Activated CD8-positive, alpha-beta memory T cell treated with anti-CD3 and anti-CD28 coated beads, Interleukin-2, amount 10 ng/mL, durations not matched to agents 7 days and 5 days (primary cell): ENCODE measurements at regions of chr17 and their contacts with region 1.

Region 1: DNA sequence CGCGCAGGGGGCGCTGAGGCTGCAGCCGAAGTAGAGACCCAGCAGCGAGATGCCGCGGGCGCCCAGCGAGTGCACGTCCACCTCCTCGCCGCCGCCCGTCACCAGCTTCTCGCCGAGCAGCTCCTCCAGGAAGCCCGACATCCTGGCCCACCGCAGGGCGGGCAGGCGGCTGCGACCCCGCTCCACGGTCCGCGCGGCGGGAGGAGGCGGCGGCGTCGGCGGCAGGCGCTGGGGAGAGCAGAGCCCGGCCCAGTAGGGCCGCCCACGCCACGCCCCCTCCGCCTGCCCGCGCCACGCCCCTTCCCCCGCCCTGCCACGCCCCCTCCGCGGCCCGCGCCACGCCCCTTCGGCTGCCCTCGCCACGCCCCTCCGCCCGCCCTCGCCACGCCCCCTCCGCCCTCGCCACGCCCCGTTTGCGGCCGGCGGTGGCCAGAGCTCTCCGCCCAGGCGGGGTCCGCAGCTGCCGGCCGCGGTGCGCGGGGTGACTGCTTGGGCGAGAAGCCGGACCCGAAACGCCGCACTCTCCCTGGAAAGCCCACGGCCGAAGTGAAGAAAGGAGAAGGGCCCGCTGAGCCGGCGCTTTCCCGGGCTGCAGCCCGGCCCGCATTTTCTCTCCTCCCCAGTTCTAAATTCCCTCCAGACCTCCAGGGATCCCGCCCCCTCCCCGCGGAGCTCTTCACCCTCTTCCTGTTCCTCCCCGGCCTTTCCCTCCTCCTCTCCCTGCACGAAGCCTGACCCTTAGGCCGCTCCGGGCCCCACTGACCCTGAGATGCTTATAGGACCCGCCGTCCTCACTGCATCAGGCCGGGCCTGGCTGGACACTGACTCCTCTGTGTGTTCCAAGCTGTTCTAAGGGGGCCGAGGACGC is at the start of gene NXN:
- DNase-seq: peak; percentile 89
- ATAC-seq: peak; percentile 94
- H3K4me3 Mint-ChIP-seq: peak within 1 kb of the TSS; percentile 59
- H3K27ac Mint-ChIP-seq: no peak within 1 kb of the TSS
- H3K4me1 Mint-ChIP-seq: peaks cover 9% of the 10 kb centered on the region
- H3K27me3 Mint-ChIP-seq: peaks cover 36% of the 10 kb centered on the region
- total RNA-seq, gene NXN: 0.14 to 0.70 TPM

Region 2: DNA sequence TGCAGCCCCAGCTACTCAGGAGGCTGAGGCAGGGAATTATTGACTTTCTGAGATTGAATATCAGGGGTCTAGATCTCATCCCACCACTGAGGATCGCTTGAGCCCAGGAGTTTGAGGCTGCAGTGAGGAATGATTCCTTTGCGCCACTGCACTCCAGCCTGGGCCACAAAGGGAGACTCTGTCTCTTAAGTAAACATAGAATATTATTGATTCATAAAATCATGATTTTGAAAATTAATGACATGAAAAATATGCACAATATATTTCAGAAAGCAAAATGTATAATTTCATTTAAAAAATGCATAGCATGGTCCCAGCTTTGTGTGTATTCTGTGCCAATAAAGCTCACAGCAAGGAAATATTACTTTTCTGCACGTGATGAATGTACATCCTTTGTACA is 263.5 kb before region 1 on chr17:
- CTCF ChIA-PET with region 1: interaction called, 15 read pairs
- DNase-seq: no peak
- ATAC-seq: no peak
- H3K4me3 Mint-ChIP-seq: no peak overlapping the region
- H3K27ac Mint-ChIP-seq: no peak overlapping the region
- H3K4me1 Mint-ChIP-seq: peaks cover 28% of the 10 kb centered on the region
- H3K27me3 Mint-ChIP-seq: peaks cover 3% of the 10 kb centered on the region

Region 3: DNA sequence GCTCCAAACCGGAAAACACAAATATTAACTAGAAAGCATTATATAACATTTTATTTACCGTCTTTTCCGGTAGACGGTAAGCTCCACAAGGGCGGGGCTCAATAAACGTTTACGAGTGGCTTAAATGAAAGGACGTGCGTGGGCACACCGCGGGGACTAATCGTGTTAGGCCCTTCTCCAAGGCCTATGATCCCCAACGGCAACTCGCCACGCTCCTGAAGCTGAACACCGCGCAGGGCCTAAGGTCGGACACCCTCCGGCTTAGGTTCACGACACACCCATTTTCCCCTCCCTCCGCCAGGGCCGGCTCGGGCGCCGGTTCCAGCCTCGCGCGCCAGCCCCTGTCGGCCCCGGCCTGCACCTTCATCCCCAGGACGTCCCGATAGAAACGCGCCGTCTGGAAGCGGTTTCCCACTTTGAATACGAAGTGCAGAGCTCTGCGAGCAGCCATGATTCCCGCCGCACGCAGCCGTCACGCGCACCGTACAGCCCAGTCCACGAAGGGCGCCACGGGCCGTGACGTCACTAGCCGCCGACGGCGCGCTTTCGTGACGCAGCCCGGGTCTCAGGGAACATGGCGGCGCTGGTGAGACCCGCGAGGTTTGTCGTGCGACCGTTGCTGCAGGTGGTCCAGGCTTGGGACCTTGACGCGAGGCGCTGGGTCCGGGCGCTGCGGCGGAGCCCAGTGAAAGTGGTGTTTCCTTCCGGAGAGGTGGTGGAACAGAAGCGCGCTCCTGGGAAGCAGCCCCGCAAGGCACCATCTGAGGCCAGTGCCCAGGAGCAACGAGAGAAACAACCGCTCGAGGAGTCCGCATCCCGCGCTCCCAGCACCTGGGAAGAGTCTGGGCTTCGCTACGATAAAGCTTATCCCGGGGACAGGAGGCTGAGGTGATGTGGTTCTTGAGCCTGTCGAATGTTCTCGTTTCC is 197.7 kb before region 1 on chr17 and contains the starts of genes GLOD4 and MRM3:
- CTCF ChIA-PET with region 1: interaction called, 28 read pairs
- DNase-seq: peak; percentile 95
- ATAC-seq: peak; percentile 96
- H3K4me3 Mint-ChIP-seq: peak within 1 kb of the TSS; percentile 97
- H3K27ac Mint-ChIP-seq: peak within 1 kb of the TSS; percentile 97
- H3K4me1 Mint-ChIP-seq: peaks cover 37% of the 10 kb centered on the region
- H3K27me3 Mint-ChIP-seq: no peaks in the 10 kb centered on the region
- total RNA-seq, gene GLOD4: 45.1 to 56.3 TPM
- total RNA-seq, gene MRM3: 21.7 to 26.5 TPM

Region 4: GRCh38 chr17:794876-795275 is 184.9 kb before region 1 on chr17:
- CTCF ChIA-PET with region 1: interaction called, 56 read pairs
- DNase-seq: peak; percentile 54
- ATAC-seq: peak; percentile 82
- H3K4me3 Mint-ChIP-seq: no peak overlapping the region
- H3K27ac Mint-ChIP-seq: no peak overlapping the region
- H3K4me1 Mint-ChIP-seq: peaks cover 6% of the 10 kb centered on the region
- H3K27me3 Mint-ChIP-seq: no peaks in the 10 kb centered on the region

Region 5: DNA sequence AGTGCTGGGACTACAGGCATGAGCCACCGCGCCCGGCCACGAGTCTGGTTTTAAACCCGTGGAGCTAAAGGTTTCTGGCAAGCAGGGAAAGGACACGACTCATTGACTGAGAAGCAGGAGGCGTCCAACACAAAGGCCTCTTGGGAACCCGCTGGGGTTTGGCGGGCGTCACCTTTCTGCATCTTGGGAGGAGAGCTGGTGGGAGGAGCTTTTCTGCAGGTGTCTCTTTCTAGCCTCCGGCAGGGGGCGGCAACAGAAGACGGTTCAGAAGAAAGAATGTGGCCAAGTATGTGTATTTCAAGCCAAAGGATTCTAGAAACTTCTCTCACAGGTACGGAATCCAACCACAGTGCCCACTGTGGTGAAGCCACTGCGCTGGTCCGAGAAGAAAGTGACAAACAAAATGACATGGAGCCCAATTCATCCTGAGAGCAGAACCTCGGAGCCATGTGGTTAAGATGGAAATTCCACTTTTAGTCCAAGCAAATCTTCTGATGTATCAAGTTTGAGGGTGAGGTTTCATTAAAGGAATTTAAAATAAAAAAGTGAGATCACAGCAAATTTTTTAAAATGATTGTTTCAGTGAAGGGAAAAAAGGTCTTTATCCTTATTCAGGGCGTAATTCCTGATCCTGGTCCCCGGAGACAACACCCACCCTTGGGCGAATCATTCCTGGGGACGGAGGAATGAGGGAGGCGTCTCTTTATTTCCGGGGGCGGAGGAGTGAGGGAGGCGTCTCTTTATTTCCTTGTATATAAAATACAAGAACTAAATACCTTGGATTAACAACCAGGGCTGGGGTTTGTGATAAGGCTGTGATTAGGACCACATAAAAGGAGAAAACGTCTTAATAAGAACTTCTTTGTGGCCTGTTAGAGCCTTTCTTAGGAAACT is 100.0 kb before region 1 on chr17:
- CTCF ChIA-PET with region 1: interaction called, 43 read pairs
- DNase-seq: peak; percentile 78
- ATAC-seq: peak; percentile 73
- H3K4me3 Mint-ChIP-seq: no peak overlapping the region
- H3K27ac Mint-ChIP-seq: no peak overlapping the region
- H3K4me1 Mint-ChIP-seq: peaks cover 13% of the 10 kb centered on the region
- H3K27me3 Mint-ChIP-seq: peaks cover 47% of the 10 kb centered on the region

Region 6: DNA sequence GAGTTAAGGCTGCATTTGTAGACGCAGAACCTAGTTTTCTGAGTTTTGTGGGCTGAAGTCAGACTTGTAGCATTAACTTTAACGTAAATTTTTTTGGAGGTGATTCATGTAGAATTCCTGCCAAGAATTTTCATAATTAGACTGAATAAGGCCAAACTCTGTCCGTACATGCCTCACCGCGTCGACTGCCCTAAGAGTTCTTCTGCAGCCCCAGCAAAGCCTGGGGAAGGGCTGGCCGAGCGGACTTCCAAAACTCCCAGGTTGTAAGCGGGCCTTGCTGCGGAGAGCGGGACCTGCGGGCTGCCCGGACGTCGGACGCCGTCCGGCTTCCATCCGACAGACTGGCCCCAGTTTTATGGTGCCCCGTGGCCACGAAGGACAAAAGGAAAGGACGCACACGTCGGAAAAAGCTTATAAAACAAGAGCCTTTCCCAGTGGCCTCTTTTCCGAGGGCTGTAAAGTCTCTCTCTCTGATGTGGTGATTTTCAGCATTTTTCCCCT is 75.7 kb before region 1 on chr17:
- CTCF ChIA-PET with region 1: no interaction called
- DNase-seq: no peak
- ATAC-seq: no peak
- H3K4me3 Mint-ChIP-seq: no peak overlapping the region
- H3K27ac Mint-ChIP-seq: no peak overlapping the region
- H3K4me1 Mint-ChIP-seq: peaks cover 2% of the 10 kb centered on the region
- H3K27me3 Mint-ChIP-seq: peaks cover 54% of the 10 kb centered on the region

Region 7: GRCh38 chr17:996554-997344 is 17.0 kb after region 1 on chr17 and contains the start of gene TIMM22:
- CTCF ChIA-PET with region 1: interaction called, 47 read pairs
- DNase-seq: peak; percentile 95
- ATAC-seq: peak; percentile 97
- H3K4me3 Mint-ChIP-seq: peak within 1 kb of the TSS; percentile 97
- H3K27ac Mint-ChIP-seq: peak within 1 kb of the TSS; percentile 97
- H3K4me1 Mint-ChIP-seq: peaks cover 25% of the 10 kb centered on the region
- H3K27me3 Mint-ChIP-seq: no peaks in the 10 kb centered on the region
- total RNA-seq, gene TIMM22: 9.7 to 12.5 TPM

Region 8: GRCh38 chr17:1124896-1125787 is 145.4 kb after region 1 on chr17:
- CTCF ChIA-PET with region 1: no interaction called
- DNase-seq: no peak
- ATAC-seq: no peak
- H3K4me3 Mint-ChIP-seq: no peak overlapping the region
- H3K27ac Mint-ChIP-seq: no peak overlapping the region
- H3K4me1 Mint-ChIP-seq: peaks cover 34% of the 10 kb centered on the region
- H3K27me3 Mint-ChIP-seq: no peaks in the 10 kb centered on the region